ENCODE measurements at regions of chr13 and their contacts with region 1.

Region 1: DNA sequence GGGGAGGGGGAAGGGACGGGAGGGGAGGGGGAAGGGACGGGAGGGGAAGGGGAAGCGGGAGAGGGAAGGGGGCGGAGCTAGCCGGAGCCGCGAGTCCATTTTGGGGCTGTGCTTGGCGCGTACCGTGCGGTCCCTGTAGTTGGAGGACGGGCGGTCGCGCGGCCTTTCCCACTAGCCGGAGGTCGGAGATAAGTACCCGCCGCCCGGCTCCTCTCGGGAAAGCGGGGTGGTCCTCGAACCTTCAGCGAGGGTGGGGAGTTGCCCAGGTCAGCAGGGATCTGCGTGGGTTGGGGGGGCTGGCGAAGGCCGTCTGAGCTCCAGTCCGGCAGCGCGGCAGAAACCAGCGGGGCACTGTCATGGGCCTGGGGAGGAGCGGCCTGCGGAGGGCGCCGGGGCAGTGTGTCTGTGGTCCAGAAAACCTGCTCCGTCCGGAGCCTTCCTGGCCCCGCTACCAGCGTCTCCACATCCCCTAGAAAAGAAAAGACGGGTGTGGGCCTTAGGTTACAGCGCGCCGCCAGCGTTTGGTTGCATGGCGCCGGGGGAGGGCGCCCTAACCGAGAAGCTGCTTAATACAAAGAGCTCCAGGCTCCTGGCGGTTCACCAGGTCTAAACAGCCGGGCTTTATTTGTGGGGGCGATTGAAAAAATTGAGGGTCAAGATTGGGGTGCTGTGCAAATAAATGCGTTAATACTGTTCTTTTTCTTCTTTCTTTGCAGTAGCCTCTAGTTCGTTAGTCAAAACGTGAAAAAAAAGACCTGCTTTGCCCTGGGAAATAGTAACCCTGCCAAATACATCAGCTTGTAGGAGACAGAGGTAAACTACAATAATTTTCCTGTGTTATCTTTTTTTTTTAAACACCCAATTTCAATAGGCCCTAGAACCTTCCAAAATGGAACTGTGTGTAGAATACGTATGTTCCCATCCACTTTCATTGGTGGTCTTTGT is at the start of gene TRIM13:
- DNase-seq: peak; percentile 72 to 91 (median 80)
- ATAC-seq: peak; percentile 83
- H3K4me3 ChIP-seq: peak within 1 kb of the TSS; percentile 96
- H3K4me3 Mint-ChIP-seq: peak within 1 kb of the TSS; percentile 97
- H3K27ac ChIP-seq: peak within 1 kb of the TSS; percentile 91
- H3K27ac Mint-ChIP-seq: peak within 1 kb of the TSS; percentile 90
- H3K4me1 ChIP-seq: peaks cover 32% of the 10 kb centered on the region
- H3K4me1 Mint-ChIP-seq: peaks cover 56% of the 10 kb centered on the region
- H3K27me3 ChIP-seq: no peaks in the 10 kb centered on the region
- H3K27me3 Mint-ChIP-seq: no peaks in the 10 kb centered on the region
- CTCF ChIP-seq: peak; percentile 95
- total RNA-seq, gene TRIM13: 32.5 to 32.9 TPM

Region 2: GRCh38 chr13:49421391-49421790 is 575.8 kb before region 1 on chr13:
- CTCF ChIA-PET with region 1: no interaction called
- POLR2A ChIA-PET with region 1: no interaction called
- intact Hi-C with region 1: no loop called
- DNase-seq: peak in 10 of 14 experiments; percentile 5 to 57 (median 25)
- ATAC-seq: peak; percentile 59
- H3K4me3 ChIP-seq: no peak overlapping the region
- H3K4me3 Mint-ChIP-seq: no peak overlapping the region
- H3K27ac ChIP-seq: no peak overlapping the region
- H3K27ac Mint-ChIP-seq: no peak overlapping the region
- H3K4me1 ChIP-seq: no peaks in the 10 kb centered on the region
- H3K4me1 Mint-ChIP-seq: no peaks in the 10 kb centered on the region
- H3K27me3 ChIP-seq: no peaks in the 10 kb centered on the region
- H3K27me3 Mint-ChIP-seq: no peaks in the 10 kb centered on the region
- CTCF ChIP-seq: no peak

Region 3: DNA sequence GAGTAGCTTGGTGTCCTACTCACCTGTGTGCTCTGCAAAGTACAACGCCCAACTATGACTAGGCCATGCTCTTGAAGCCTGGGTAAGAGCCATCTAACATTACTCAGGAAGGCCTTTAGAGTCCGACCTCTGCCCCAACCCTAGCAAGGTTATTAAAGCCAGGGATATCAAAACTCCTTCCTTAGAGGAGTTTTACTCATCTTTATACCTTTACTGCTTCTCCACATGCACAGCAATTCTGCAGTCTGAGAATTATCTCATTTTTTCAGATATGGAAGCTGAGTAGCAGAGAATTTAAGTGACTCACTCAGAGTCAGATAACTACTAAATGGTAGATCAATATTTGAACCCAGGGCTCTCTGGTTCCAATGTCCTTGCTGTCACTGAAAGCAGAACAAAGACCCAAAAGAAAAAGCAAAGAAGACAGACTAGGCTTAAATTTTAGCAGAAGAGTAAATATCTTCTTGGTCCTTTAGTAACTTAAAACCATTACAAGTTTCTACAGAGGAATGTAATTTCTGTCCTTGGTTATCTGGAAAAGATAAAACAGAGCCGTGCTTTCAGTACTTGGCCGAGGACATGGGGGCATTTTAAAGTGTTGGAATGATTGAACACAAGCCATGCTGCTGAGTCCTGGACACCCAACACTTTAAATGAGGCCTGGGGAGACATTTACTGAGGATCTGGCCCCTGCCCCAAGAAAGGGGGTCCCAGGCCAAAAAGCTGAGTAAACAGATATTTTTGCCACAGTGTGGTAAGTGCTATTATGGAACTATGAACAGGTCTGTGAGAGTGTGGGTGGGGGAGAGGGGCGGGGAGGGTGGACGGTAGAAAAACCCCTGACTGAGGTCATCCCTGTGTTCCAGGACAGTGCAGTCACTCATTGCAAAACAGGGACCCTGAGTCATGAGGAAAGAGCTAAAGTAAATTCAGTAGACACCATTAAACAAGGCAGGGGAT is 186.4 kb before region 1 on chr13:
- CTCF ChIA-PET with region 1: no interaction called
- POLR2A ChIA-PET with region 1: no interaction called
- intact Hi-C with region 1: no loop called
- DNase-seq: no peak
- ATAC-seq: no peak
- H3K4me3 ChIP-seq: no peak overlapping the region
- H3K4me3 Mint-ChIP-seq: no peak overlapping the region
- H3K27ac ChIP-seq: no peak overlapping the region
- H3K27ac Mint-ChIP-seq: no peak overlapping the region
- H3K4me1 ChIP-seq: no peaks in the 10 kb centered on the region
- H3K4me1 Mint-ChIP-seq: no peaks in the 10 kb centered on the region
- H3K27me3 ChIP-seq: peaks cover 0 to 5% of the 10 kb centered on the region in 2 experiments
- H3K27me3 Mint-ChIP-seq: peaks cover 20% of the 10 kb centered on the region
- CTCF ChIP-seq: no peak

Region 4: DNA sequence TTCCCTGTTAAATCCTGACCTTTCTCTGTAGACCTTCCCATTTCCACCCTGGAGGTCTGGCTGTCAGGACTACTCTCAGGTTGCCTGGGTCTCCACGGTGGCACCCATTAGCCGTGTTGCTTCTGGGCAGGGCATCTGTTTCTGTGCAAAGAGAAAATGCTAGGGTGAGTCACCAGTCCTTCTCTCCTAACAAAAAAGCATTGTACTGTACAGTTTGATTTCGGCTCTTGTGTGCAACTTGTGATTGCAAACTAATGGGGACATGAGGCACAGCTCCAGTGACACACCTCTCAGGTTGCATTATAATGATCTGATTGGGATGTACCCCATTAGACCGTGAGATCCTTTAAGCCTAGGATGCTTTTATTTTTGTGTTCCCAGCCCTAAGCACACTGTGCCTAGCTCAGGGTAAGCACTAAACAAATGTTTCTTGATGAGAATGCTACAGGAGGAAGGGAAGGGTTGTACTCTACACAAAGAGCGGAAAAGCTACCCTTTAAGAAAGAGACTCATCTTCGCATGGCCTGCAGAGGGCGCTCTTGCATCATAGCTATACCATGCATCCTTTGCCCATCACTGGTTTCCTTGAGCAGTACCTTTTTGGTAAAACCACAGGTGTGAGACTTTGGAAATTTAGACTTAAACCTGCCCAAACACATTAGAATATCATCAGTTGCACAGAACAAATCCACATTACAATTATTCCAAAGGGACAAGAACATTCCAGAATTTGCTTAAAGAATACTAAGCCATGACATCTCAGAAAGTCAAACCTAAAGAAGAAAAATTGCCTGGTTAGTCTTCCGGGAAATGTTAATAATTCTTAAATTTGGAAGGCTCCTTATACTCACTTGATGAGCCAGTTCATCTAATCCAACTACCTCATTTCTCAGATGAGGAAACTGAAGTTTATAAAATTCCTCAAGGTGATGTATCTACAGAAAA is 20.6 kb before region 1 on chr13:
- CTCF ChIA-PET with region 1: interaction called, 20 read pairs
- POLR2A ChIA-PET with region 1: interaction called, 14 read pairs
- intact Hi-C with region 1: no loop called
- DNase-seq: peak; percentile 65 to 91 (median 74)
- ATAC-seq: peak; percentile 90
- H3K4me3 ChIP-seq: no peak overlapping the region
- H3K4me3 Mint-ChIP-seq: no peak overlapping the region
- H3K27ac ChIP-seq: no peak overlapping the region
- H3K27ac Mint-ChIP-seq: no peak overlapping the region
- H3K4me1 ChIP-seq: no peaks in the 10 kb centered on the region
- H3K4me1 Mint-ChIP-seq: peaks cover 4% of the 10 kb centered on the region
- H3K27me3 ChIP-seq: no peaks in the 10 kb centered on the region
- H3K27me3 Mint-ChIP-seq: no peaks in the 10 kb centered on the region
- CTCF ChIP-seq: peak; percentile 97

Region 5: GRCh38 chr13:50069261-50069660 is 72.0 kb after region 1 on chr13:
- CTCF ChIA-PET with region 1: interaction called, 11 read pairs
- POLR2A ChIA-PET with region 1: interaction called, 11 read pairs
- intact Hi-C with region 1: no loop called
- DNase-seq: no peak
- ATAC-seq: no peak
- H3K4me3 ChIP-seq: no peak overlapping the region
- H3K4me3 Mint-ChIP-seq: no peak overlapping the region
- H3K27ac ChIP-seq: no peak overlapping the region
- H3K27ac Mint-ChIP-seq: no peak overlapping the region
- H3K4me1 ChIP-seq: no peaks in the 10 kb centered on the region
- H3K4me1 Mint-ChIP-seq: peaks cover 13% of the 10 kb centered on the region
- H3K27me3 ChIP-seq: no peaks in the 10 kb centered on the region
- H3K27me3 Mint-ChIP-seq: peaks cover 7% of the 10 kb centered on the region
- CTCF ChIP-seq: no peak

Region 6: GRCh38 chr13:50130123-50130946 is 133.1 kb after region 1 on chr13:
- CTCF ChIA-PET with region 1: interaction called, 8 read pairs
- POLR2A ChIA-PET with region 1: interaction called, 232 read pairs
- intact Hi-C with region 1: loop called in 1 of 2 experiments (anchors 2 kb)
- DNase-seq: peak in 8 of 14 experiments; percentile 18 to 69 (median 38)
- ATAC-seq: peak; percentile 2
- H3K4me3 ChIP-seq: peak overlapping the region; percentile 53
- H3K4me3 Mint-ChIP-seq: peak overlapping the region; percentile 91
- H3K27ac ChIP-seq: peak overlapping the region in 1 of 2 donors; percentile 13
- H3K27ac Mint-ChIP-seq: peak overlapping the region; percentile 94
- H3K4me1 ChIP-seq: peaks cover 71% of the 10 kb centered on the region
- H3K4me1 Mint-ChIP-seq: peaks cover 59% of the 10 kb centered on the region
- H3K27me3 ChIP-seq: peaks cover 62 to 64% of the 10 kb centered on the region in 2 experiments
- H3K27me3 Mint-ChIP-seq: peaks cover 84% of the 10 kb centered on the region
- CTCF ChIP-seq: no peak

Region 7: DNA sequence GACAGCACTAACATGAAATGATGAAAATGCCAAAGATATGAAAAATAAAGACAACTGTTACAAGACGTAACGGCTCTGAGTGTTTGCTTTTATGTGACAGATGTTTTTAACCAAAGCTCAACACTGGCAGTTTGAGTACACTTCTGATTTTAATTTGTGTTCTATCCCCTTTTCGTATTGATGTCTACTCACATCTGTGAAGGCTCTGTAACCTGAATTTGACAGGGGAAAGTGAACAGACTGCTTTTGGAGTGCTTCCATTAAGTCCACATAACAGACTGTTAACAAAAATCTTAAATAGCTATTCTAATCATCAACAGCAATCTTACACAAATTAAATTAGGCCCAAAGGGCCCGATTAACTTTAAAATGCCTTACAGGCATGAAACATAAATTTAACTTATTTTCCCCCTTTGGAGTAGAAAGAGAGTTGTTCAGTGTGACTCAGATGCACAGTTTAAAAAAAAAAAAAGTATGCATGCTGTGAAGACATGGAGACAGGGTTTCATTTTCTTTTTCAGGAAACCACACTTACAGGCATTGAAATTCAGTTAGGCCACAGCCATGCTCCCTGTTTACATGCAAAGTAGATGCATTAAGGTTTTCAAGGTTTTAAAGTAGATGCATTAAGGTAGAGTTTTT is 896.1 kb after region 1 on chr13:
- CTCF ChIA-PET with region 1: interaction called, 10 read pairs
- POLR2A ChIA-PET with region 1: interaction called, 26 read pairs
- intact Hi-C with region 1: no loop called
- DNase-seq: peak in 5 of 14 experiments; percentile 22 to 83 (median 71)
- ATAC-seq: peak; percentile 92
- H3K4me3 ChIP-seq: peak overlapping the region; percentile 28
- H3K4me3 Mint-ChIP-seq: peak overlapping the region; percentile 83
- H3K27ac ChIP-seq: peak overlapping the region; percentile 66 to 81
- H3K27ac Mint-ChIP-seq: peak overlapping the region; percentile 84
- H3K4me1 ChIP-seq: peaks cover 19% of the 10 kb centered on the region
- H3K4me1 Mint-ChIP-seq: peaks cover 43% of the 10 kb centered on the region
- H3K27me3 ChIP-seq: no peaks in the 10 kb centered on the region
- H3K27me3 Mint-ChIP-seq: no peaks in the 10 kb centered on the region
- CTCF ChIP-seq: no peak

Measured in CD4-positive, alpha-beta T cell (primary cell).